Sciatic nerve (tissue), 2 donors: ENCODE measurements at regions of chr1 and their contacts with region 1.

Region 1: DNA sequence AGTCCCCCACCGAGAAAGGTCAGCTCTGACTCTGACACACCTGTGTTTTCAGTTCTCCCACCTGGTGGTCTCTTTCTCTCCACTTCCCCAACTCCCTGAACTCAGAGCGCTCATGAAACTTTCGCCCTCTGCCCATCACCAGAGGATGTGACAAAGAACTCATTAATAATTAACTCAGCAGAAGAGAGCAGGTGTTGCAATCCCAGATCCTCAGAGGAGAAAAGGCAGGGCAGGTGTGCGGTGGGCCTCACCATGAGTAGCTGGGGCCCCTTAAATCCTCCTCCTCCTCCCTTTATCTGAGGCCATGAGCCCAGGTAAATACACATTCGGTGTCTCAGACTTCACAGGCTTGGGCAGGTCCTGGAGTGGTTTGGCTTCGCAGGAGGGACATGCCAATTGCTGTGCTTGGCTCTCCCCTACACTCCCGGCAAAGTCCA is 1.7 kb upstream of the LAMB3 start:
- DNase-seq: no peak
- ATAC-seq: no peak

Region 2: DNA sequence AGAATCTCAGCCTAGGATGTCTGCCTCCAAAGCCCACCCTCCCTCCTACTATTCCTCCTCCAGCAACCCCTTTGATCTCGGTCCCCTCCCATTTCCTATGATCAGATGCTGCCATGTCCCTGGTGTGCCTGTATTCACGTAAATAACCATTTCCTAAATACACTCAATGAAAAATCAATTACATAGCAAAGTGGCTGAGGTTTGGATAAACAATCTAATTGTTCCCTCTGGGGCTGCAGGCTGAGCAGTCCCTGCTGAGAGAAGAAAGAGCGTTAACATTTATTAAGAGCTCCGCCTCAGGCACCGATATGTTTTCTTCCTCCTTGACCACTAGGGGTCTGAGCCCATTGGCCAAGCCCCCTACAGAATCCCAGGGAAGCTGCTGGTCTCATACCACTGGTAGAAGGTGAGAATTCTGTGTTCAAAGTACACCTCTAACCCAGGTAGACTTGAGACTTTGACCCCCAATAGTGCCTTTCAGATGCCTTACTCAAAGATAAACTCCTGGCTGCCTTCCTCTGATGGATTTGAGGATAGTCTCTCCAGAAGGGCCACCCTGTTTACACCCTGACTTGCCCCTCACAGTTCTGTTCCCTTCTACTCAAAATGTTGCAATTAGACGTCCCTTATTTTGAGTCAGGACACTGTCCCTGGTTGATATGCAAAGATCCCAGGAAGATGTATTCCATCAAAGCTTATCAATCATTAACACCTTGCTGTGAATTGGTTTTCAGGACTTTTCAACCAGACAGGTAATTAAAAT is 104.3 kb before region 1 on chr1:
- intact Hi-C with region 1: no loop called
- DNase-seq: no peak
- ATAC-seq: no peak

Region 3: GRCh38 chr1:209630383-209631225 is 23.3 kb before region 1 on chr1:
- intact Hi-C with region 1: loop called (anchors 2 kb)
- DNase-seq: no peak
- ATAC-seq: no peak

Region 4: GRCh38 chr1:209723756-209724693 is 70.1 kb after region 1 on chr1:
- intact Hi-C with region 1: no loop called
- DNase-seq: no peak
- ATAC-seq: peak; percentile 57

Region 5: DNA sequence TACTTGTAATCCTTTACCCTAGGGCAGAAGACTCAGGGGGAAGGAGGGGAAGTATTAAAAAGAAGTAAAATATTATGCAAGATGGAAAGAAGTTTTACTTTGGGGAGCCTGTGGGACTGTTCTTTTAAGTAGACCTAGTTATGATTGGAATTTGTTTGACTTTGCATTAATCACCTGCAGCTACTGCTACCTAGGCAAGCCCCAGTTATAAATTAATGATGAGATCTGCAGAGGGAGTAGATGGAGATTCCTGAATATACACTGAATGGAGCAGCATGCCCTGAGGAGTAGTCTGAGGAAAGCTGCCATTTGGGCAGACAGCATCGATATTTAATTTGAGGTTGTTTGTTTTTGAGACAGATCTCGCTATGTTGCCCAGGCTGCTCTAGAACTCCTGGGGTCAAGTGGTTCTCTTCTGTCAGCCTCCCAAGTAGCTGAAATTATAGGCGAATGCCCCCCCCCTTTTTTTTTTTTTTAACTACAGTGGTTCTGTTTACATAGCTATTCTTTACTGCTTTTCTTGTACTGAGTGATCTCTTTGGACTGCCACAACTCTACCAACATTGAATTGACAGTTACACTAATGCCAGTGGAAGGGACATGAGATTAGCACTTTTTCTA is 497.2 kb after region 1 on chr1:
- intact Hi-C with region 1: no loop called
- DNase-seq: no peak
- ATAC-seq: no peak